ENCODE measurements at regions of chr22 and their contacts with region 1.

Region 1: DNA sequence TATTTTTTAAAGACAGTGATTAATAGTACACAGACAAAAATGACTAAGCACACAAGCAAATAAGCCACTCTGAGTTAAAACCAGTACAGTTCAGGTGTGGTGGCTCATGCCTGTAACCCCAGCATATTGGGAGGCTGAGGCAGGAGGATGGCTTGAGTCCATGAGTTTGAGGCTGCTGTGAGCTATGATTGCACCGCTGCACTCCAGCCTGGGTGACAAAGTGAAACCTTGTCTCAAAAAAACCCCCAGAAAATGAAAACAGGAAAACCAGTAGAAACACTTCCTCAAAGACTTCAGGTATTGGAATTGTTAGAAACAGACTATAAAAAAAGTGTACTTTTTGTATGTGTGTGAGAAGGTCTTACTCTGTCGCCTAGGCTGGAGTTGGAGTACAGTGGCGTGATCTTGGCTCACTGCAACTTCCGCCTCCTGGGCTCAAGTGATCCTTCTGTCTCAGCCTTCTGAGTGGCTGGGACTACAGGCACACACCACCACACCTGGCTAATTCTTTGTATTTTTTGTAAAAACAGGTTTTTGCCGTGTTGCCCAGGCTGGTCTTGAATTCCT is 33.0 kb downstream of the PPP6R2 start:
- H3K4me3 Mint-ChIP-seq: no peak overlapping the region
- H3K27ac Mint-ChIP-seq: no peak overlapping the region
- H3K4me1 Mint-ChIP-seq: peaks cover 19% of the 10 kb centered on the region
- H3K27me3 Mint-ChIP-seq: no peaks in the 10 kb centered on the region

Region 2: DNA sequence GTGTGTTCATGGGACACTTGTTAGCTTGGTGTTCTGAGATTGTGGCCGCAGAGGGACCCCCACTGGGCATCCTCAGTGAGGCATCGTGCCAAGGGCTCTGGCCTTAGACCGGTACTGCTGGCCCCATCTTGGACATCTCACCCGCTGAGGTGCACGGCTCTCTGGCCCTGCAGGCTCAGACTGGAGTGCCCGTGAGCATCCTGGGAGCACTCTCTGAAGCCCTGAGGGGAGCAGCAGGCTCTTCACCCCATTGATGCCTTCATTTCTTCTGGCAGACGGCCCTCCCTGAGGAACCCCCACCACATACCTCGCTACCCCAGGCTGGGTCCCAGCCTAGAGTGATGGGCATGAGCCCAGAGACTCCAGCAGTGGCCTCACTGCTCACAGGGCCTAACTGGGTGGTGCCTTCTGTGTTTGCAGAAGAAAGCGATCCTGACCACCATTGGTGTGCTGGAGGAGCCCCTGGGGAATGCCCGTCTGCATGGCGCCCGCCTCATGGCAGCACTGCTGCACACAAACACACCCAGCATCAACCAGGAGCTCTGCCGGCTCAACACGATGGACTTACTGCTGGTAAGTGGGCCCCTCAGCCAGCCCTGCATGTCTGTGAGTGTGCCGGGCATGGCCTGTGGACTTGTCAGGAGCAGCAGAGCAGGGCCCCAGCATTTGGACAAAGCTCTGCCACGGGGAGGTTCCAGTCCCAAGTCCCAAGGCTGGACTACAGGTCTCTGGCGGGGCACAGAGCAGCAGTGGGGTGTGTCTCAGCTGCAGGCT is 47.1 kb after region 1 on chr22:
- intact Hi-C with region 1: loop called (anchors 10 kb)
- H3K4me3 Mint-ChIP-seq: no peak overlapping the region
- H3K27ac Mint-ChIP-seq: no peak overlapping the region
- H3K4me1 Mint-ChIP-seq: peaks cover 20% of the 10 kb centered on the region
- H3K27me3 Mint-ChIP-seq: no peaks in the 10 kb centered on the region